ENCODE measurements at regions of chrX and their contacts with region 1.

Region 1: GRCh38 chrX:110450050-110450449 is 91.4 kb downstream of the RTL9 start:
- DNase-seq: peak; percentile 70
- H3K4me3 ChIP-seq: no peak overlapping the region
- H3K27ac ChIP-seq: no peak overlapping the region
- H3K4me1 ChIP-seq: no peaks in the 10 kb centered on the region
- H3K27me3 ChIP-seq: no peaks in the 10 kb centered on the region

Region 2: DNA sequence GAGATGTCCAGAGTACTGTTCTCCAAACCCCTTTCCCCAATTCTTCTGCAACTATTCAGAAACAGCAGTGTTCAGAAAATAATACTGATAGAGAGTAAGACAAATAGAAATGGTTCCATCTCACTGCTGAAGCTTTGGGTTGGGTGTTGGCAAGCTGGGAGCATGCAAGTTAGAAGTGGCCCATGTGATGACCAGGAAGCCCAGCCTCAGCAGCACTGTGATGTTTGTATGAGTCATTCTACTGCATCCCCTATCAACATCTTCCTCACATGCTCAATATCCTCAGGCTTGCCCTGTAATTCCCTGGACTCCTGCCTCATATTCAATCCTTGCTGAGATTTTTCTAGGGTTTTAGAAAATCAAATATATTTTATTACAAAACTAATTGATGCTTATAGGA is 249.1 kb after region 1 on chrX:
- in situ Hi-C with region 1: loop called (anchors 25 kb)
- DNase-seq: peak; percentile 30
- H3K4me3 ChIP-seq: no peak overlapping the region
- H3K27ac ChIP-seq: no peak overlapping the region
- H3K4me1 ChIP-seq: no peaks in the 10 kb centered on the region
- H3K27me3 ChIP-seq: no peaks in the 10 kb centered on the region

Measured in GM23248 (cell line).